Dendritic cell treated with granulocyte-macrophage colony-stimulating factor and Interleukin-4, amounts not matched to agents 40 ng/mL and 50 ng/mL, for 4 days (primary cell): ENCODE measurements at regions of chr4 and their contacts with region 1.

Region 1: DNA sequence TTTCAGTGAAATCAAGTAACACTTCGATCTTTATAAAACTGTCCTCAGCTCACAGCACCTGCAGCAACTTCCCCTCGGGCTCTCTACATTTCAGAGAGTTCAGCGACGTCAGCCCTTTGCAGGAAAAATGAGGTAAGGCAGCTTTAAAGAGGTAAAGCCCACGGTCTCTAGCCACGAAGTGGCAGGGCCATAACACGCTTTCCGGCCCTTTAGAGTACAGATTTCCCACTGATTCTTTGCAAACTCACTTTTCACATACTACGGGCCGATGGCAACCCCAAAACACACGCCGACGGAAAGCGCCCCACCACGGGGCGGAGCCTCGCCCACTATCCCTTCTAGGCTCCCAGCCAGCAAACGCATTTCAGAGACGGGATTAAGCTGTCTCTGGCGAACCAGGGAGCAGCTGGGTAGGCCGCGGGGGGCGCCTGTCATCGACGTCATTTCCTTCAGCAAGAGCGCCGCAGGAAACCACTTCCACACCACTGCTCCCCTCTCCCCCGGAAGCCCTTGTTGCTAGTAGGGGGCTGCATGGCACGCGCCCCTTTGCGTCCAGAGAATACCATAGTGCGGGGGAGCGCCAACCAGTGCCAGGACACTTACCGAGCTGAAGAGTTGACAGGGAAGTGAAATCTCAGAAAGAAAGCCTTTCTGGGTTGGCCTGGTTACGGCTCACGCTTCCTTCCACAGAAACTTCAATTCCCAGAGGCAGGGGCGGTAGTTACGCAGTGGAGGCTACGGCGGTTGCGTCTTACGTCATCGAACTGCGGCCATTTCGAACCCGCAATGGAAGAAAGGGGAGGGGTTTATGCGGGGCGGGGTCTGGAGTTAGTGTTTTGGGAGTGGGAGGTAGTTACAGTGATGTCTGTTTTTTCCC is at the start of gene TRMT10A:
- H3K4me3 Mint-ChIP-seq: peak within 1 kb of the TSS; percentile 87
- H3K27ac Mint-ChIP-seq: peak within 1 kb of the TSS; percentile 95
- H3K4me1 Mint-ChIP-seq: no peaks in the 10 kb centered on the region
- H3K27me3 Mint-ChIP-seq: peaks cover 12% of the 10 kb centered on the region

Region 2: DNA sequence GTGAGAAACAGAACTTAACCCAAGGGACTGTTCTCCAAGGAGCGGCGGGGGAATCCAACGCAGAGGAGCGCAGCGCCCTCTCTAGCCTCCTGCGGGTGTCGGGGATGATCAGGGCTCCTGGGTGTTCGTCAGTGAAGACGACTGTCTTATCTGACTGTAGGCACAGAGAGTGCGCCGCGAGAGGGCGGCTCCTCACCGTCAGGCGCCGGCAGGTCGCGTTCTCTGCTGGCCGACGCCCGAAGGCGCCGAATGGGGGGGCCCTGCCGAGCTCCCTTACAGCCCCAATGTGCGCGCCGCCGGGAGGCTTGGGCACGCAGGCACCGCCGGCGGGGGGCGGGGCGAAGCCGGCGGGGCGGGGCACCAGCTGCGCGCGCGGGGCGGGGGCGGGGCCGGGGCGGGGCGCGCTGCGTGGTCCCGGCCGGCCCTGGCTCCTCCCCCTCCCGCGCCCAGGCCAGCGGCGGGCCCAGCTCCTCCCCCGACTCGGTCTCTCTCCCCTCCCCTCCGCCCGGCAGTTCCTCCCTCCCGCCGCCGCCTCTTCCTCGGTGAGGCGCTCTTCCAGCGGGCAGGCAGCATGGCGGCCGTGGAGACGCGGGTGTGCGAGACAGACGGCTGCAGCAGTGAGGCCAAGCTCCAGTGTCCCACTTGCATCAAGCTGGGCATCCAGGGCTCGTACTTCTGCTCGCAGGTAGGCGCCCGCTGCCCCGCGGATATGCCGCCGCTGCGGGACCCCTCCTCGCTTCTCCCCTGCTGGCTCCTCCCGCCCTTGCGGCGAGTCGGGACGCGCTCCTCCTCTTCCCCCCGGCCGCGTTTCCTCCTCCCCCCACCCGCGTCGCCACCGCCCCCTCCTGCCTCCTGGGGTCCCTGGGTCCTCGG is 568.1 kb before region 1 on chr4 and contains the start of gene METAP1:
- intact Hi-C with region 1: loop called (anchors 10 kb)
- H3K4me3 Mint-ChIP-seq: peak within 1 kb of the TSS; percentile 86
- H3K27ac Mint-ChIP-seq: peak within 1 kb of the TSS; percentile 94
- H3K4me1 Mint-ChIP-seq: peaks cover 27% of the 10 kb centered on the region
- H3K27me3 Mint-ChIP-seq: peaks cover 3% of the 10 kb centered on the region

Region 3: GRCh38 chr4:99529228-99529627 is 34.3 kb before region 1 on chr4:
- intact Hi-C with region 1: no loop called
- H3K4me3 Mint-ChIP-seq: no peak overlapping the region
- H3K27ac Mint-ChIP-seq: no peak overlapping the region
- H3K4me1 Mint-ChIP-seq: no peaks in the 10 kb centered on the region
- H3K27me3 Mint-ChIP-seq: peaks cover 8% of the 10 kb centered on the region

Region 4: GRCh38 chr4:99894161-99894997 is 330.8 kb after region 1 on chr4 and contains the start of gene LAMTOR3:
- intact Hi-C with region 1: loop called (anchors 1 kb)
- H3K4me3 Mint-ChIP-seq: peak within 1 kb of the TSS; percentile 97
- H3K27ac Mint-ChIP-seq: peak within 1 kb of the TSS; percentile 96
- H3K4me1 Mint-ChIP-seq: peaks cover 31% of the 10 kb centered on the region
- H3K27me3 Mint-ChIP-seq: no peaks in the 10 kb centered on the region

Region 5: GRCh38 chr4:100093091-100093866 is 529.7 kb after region 1 on chr4:
- intact Hi-C with region 1: loop called (anchors 10 kb)
- H3K4me3 Mint-ChIP-seq: no peak overlapping the region
- H3K27ac Mint-ChIP-seq: no peak overlapping the region
- H3K4me1 Mint-ChIP-seq: peaks cover 6% of the 10 kb centered on the region
- H3K27me3 Mint-ChIP-seq: peaks cover 1% of the 10 kb centered on the region